GM10248 (cell line): ENCODE measurements at regions of chr15 and their contacts with region 1.

Region 1: GRCh38 chr15:38504680-38505467 is 50.9 kb downstream of the FAM98B start:
- DNase-seq: no peak
- CTCF ChIP-seq: no peak

Region 2: DNA sequence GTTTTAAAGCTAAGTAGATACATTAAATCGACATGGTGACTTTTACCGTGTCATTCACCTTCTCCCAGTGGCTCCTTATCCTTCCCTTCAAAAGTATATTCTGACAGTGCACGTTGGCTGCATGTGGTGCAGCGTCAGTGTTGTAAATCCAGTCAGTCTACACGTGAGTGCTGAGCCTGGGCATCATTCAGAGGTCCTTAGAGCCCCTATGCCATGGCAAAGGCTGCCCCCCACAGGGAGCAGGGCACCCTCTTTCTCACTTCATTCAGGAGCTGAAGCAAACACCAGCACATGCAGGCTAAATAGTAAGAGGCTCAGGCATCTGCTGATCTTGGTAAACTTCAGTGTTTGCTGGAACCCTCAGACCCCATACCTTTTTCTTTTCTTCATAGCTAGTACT is 16.4 kb after region 1 on chr15:
- CTCF ChIA-PET with region 1: interaction called, 10 read pairs
- POLR2A ChIA-PET with region 1: no interaction called
- DNase-seq: no peak
- CTCF ChIP-seq: no peak